Heart left ventricle (tissue), 16 donors: ENCODE measurements at regions of chr12 and their contacts with region 1.

Region 1: GRCh38 chr12:93569656-93570551 is 2.6 kb upstream of the SOCS2 start:
- DNase-seq: peak; percentile 90 to 92 (median 91)
- ATAC-seq: peak; percentile 76 to 84 (median 79)
- H3K4me3 ChIP-seq: peak overlapping the region; percentile 61 to 90 (median 72)
- H3K27ac ChIP-seq: peak overlapping the region; percentile 81 to 99 (median 96)
- H3K4me1 ChIP-seq: peaks cover 0 to 35% (median 6%) of the 10 kb centered on the region in 12 donors
- H3K27me3 ChIP-seq: peaks cover 0 to 21% (median 0%) of the 10 kb centered on the region in 9 donors
- CTCF ChIP-seq: peak; percentile 60 to 93 (median 88)
- POLR2A ChIP-seq: no peak

Region 2: DNA sequence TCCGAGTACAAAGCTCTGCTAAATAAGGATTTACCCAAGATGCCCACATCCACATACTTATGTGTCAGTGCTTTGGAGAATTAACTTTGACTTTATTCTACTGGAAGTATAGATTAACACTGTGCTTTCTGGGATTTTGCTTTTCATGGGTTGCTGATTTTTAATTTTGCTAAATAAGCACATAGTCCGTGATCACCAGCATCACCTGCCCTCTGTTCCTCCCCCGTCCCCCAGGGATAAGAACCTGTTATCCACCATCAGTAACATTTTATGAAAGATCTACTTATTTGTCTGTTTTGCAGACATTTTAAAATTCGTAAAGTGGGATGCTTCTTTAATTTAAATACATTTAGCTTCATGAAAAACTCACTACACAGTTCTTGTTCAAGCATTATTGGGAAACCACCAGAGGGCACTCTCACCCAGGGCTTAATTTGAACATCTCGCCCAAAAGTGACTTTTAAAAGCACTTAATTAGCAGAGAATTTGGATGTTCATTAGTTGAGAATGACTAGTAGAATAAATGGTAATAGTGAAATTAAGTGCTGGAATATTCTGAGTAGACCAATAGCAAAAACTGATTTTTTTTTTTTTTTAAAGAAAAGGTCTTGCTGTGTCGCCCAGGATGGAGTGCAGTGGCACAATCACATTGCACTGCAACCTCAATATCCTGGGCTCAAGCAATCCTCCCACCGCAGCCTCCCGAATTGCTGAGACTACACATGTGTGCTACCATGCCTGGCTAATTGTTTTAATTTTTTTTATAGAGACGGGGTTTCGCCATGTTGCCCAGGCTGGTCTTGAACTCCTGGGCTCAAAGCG is 66.9 kb before region 1 on chr12:
- intact Hi-C with region 1: loop called in 7 of 10 experiments (anchors 2 to 10 kb)
- DNase-seq: peak in 2 of 5 donors; percentile 33 to 39
- ATAC-seq: peak in 1 of 4 donors; percentile 28
- H3K4me3 ChIP-seq: no peak overlapping the region
- H3K27ac ChIP-seq: no peak overlapping the region
- H3K4me1 ChIP-seq: peaks cover 0 to 11% (median 0%) of the 10 kb centered on the region in 12 donors
- H3K27me3 ChIP-seq: no peaks in the 10 kb centered on the region
- CTCF ChIP-seq: peak; percentile 66 to 87 (median 81)
- POLR2A ChIP-seq: no peak

Region 3: DNA sequence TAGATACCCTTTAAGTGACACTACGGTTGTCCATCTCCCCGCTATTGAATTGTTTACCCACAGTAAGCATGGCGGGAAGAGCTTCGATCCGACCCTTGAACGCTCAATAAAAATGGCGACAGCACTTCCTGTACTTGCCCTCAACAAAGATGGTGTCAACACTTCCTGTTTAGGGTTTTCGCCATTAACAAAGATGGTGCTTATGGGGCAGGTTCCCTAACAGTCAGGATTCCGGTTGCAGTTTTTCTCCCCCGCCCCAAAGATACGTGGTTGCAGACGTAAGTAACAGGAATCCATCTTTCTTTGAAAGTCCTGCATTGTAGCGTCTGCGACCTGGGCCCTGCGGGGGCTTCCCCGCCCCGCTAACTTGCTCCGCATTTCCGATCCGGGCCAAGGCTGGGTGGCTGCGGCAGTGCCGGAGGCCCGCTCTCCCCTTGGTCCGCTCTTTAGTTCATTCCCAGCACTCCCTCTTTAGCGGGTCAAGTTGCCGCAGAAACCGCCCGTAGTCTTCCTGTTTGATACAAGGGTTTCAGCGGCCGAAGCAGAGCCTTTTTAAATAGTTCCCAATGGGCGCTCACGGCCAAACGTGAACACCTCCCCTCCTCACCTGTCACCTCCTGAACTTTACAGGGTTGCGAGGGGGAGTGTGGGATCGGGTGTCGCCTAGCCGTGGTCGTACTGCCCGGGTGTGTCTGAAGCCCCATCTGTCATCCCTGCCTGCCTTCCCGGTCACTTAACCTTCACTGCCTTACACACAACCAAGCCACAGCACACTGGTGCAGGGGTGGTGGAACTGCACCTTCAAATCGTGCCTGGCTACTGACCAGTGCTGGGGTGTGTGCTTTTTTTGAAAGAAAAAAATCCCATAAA is 107.5 kb after region 1 on chr12 and contains the start of gene CRADD:
- intact Hi-C with region 1: loop called (anchors 1 to 5 kb)
- DNase-seq: peak; percentile 79 to 90 (median 83)
- ATAC-seq: peak; percentile 86 to 94 (median 92)
- H3K4me3 ChIP-seq: peak within 1 kb of the TSS; percentile 36 to 84 (median 70)
- H3K27ac ChIP-seq: peak within 1 kb of the TSS; percentile 84 to 100 (median 97)
- H3K4me1 ChIP-seq: peaks cover 0 to 52% (median 24%) of the 10 kb centered on the region in 12 donors
- H3K27me3 ChIP-seq: no peaks in the 10 kb centered on the region
- CTCF ChIP-seq: no peak
- POLR2A ChIP-seq: peak in 1 of 2 donors; percentile 73
- total RNA-seq, gene CRADD: 40.1 to 100 (median 56.1) TPM

Region 4: DNA sequence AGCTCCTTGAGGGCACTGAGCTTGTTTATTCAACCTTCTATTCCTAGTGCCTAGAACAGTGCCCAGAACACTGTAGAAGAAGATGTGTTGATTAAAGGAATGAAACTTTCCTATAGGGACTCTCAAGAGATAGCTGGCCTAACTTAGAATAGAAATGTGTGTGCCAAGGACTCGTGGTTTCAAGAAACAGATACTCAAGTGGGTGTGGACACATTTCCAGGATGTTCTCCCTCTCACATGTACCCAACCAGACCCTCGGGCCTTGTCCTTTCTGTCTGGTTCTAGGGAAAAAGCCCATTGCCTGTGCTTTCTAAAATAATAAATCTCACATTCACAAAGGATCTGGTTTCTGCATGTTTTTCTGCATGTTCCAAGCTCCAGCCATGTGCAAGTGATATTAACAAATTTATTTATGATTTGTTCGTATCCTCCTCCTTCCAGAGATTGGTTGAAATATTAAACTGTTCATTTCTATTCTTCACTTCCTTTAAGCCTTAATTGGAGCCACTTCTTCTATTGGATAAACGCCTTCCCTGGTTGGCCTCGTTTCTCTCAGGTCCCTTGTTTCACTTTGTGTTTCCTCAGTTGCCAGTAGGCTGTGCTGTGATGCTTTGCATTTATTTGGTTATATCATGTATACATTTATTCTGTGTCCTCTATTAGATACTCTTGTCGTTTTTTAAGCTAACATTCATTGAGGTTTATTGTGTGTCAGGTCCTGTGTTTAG is 197.1 kb after region 1 on chr12:
- intact Hi-C with region 1: loop called in 1 of 10 experiments (anchors 5 kb)
- DNase-seq: peak in 4 of 5 donors; percentile 37 to 60 (median 50)
- ATAC-seq: peak; percentile 79 to 88 (median 82)
- H3K4me3 ChIP-seq: peak overlapping the region in 1 of 12 donors; percentile 5
- H3K27ac ChIP-seq: peak overlapping the region; percentile 27 to 72 (median 55)
- H3K4me1 ChIP-seq: peaks cover 0 to 56% (median 42%) of the 10 kb centered on the region in 12 donors
- H3K27me3 ChIP-seq: no peaks in the 10 kb centered on the region
- CTCF ChIP-seq: peak; percentile 38 to 81 (median 64)
- POLR2A ChIP-seq: no peak

Region 5: GRCh38 chr12:93813972-93814821 is 244.3 kb after region 1 on chr12:
- intact Hi-C with region 1: loop called in 4 of 10 experiments (anchors 1 to 10 kb)
- DNase-seq: peak; percentile 79 to 91 (median 80)
- ATAC-seq: peak; percentile 91 to 93 (median 92)
- H3K4me3 ChIP-seq: peak overlapping the region in 6 of 12 donors; percentile 6 to 37 (median 14)
- H3K27ac ChIP-seq: peak overlapping the region; percentile 81 to 95 (median 88)
- H3K4me1 ChIP-seq: peaks cover 9 to 68% (median 50%) of the 10 kb centered on the region in 12 donors
- H3K27me3 ChIP-seq: no peaks in the 10 kb centered on the region
- CTCF ChIP-seq: no peak
- POLR2A ChIP-seq: no peak